Right cardiac atrium (tissue), 5 donors: ENCODE measurements at regions of chr5 and their contacts with region 1.

Region 1: DNA sequence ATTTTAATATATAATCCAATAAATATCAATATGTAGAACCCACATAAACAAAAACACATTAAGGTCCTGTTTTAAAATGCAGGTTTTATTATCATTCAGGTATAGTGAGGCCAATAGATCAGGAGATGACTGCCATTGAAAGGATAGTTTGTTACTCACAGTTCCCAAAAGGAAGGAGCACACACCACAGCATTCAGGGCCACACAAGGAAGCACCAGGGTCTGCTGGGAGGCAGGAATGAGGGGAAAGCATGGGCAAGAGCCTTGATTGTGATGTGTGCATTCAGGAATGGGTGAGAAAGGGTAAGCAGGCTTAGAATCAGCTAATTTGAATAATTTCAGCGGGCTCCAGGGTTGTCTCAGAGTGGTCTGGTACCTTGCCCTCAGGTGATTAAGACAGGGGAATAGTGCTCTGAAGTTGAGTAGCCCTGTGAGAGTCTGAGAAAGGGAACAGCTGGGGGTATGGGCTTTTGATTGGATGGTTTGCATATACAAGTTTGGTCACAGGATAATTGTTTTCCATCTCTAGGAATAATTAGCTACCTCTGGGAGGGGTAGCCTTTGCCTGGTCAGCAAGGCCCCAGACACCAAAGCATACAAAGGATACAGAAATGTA is 19.8 kb upstream of the OTULIN start:
- DNase-seq: no peak
- ATAC-seq: no peak
- H3K4me3 ChIP-seq: no peak overlapping the region
- H3K27ac ChIP-seq: no peak overlapping the region
- H3K4me1 ChIP-seq: no peaks in the 10 kb centered on the region
- H3K27me3 ChIP-seq: no peaks in the 10 kb centered on the region

Region 2: DNA sequence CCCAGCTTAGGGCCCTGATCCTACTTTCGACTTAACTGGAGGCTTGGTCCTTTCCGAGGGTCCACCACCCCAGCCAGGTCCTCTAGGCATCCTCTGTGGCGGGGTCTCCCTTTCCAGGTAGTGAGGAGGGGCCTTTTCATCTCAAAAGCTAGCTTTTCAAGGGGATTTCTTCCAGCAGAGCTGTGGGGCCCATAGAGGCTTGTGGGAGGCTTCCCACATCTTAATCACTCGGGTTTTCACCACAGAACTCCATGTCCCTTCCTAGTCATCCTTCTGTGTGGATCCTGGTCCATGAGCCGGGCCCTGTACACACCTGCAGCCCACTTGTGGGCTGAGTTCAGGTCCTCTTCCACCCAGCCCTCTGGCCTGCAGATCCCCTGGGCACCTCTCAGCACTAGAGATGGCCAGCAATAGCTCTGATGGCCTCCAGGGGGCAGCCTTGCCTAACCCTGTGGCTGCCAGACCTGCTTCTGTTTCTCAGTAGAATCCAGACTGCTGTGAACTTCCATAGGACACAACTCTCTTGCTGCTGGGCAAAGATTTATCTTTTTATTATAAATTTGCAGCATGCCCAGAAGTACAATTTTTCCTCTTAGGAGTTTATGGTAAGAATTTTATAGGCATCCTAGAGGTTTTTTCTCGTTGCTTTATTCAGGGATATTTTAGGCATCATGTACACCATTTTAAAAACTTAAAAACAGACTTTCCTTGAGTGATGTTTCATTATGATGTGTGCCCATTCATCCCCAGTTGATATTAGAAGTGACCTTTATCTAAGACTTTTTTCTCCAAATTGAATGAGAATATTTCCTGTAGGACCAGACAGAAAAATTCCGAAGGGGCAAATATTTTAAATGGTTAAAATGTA is 292.7 kb before region 1 on chr5:
- intact Hi-C with region 1: loop called in 3 of 4 experiments (anchors 5 to 10 kb)
- DNase-seq: peak; percentile 59 to 86 (median 82)
- ATAC-seq: peak; percentile 88 to 89
- H3K4me3 ChIP-seq: no peak overlapping the region
- H3K27ac ChIP-seq: no peak overlapping the region
- H3K4me1 ChIP-seq: no peaks in the 10 kb centered on the region
- H3K27me3 ChIP-seq: no peaks in the 10 kb centered on the region

Region 3: DNA sequence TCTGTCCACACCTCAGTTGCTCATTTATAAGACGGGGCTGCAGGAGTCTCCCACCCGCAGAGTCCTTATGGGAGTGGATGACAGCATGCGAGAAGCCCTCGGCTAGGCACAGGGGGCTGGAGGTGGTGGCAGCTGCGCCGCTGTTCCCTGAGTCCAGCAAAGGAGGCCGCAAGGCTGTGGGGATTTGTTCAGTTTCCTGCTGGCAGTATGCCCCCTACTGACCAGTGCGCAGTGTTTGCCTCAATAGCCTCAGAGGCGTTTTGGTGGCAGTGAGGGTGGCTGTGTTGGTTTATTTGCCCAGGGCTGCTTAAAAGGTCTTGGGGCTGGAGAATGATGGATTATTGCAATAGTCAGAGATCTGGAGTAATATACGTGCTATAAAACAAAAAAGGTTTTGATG is 239.5 kb before region 1 on chr5:
- intact Hi-C with region 1: loop called in 2 of 4 experiments (anchors 10 kb)
- DNase-seq: no peak
- ATAC-seq: no peak
- H3K4me3 ChIP-seq: no peak overlapping the region
- H3K27ac ChIP-seq: no peak overlapping the region
- H3K4me1 ChIP-seq: peaks cover 6% of the 10 kb centered on the region
- H3K27me3 ChIP-seq: no peaks in the 10 kb centered on the region

Region 4: GRCh38 chr5:14505310-14506032 is 139.3 kb before region 1 on chr5:
- intact Hi-C with region 1: loop called in 1 of 4 experiments (anchors 10 kb)
- DNase-seq: peak in 1 of 3 donors; percentile 53
- ATAC-seq: peak in 1 of 2 donors; percentile 5
- H3K4me3 ChIP-seq: no peak overlapping the region
- H3K27ac ChIP-seq: no peak overlapping the region
- H3K4me1 ChIP-seq: no peaks in the 10 kb centered on the region
- H3K27me3 ChIP-seq: no peaks in the 10 kb centered on the region